ENCODE measurements at regions of chr13 and their contacts with region 1.

Region 1: GRCh38 chr13:51797664-51798488 is 6.1 kb downstream of the DHRS12 start:
- DNase-seq: peak; percentile 66
- ATAC-seq: peak; percentile 84
- H3K4me3 Mint-ChIP-seq: no peak overlapping the region
- H3K27ac Mint-ChIP-seq: no peak overlapping the region
- H3K4me1 Mint-ChIP-seq: peaks cover 45% of the 10 kb centered on the region
- H3K27me3 Mint-ChIP-seq: no peaks in the 10 kb centered on the region
- CTCF ChIP-seq: 0 out of 2 replicates have a peak, but pooled peaks have one; percentile 33

Region 2: GRCh38 chr13:51435002-51435578 is 362.8 kb before region 1 on chr13:
- CTCF ChIA-PET with region 1: interaction called, 33 read pairs
- POLR2A ChIA-PET with region 1: no interaction called
- DNase-seq: no peak
- ATAC-seq: no peak
- H3K4me3 Mint-ChIP-seq: no peak overlapping the region
- H3K27ac Mint-ChIP-seq: no peak overlapping the region
- H3K4me1 Mint-ChIP-seq: peaks cover 37% of the 10 kb centered on the region
- H3K27me3 Mint-ChIP-seq: no peaks in the 10 kb centered on the region
- CTCF ChIP-seq: no peak; the same call in 1 of the 2 replicates

Region 3: GRCh38 chr13:51452361-51453206 is 345.3 kb before region 1 on chr13 and contains the start of gene INTS6:
- CTCF ChIA-PET with region 1: interaction called, 18 read pairs
- POLR2A ChIA-PET with region 1: interaction called, 3 read pairs
- DNase-seq: peak; percentile 99
- ATAC-seq: peak; percentile 92
- H3K4me3 Mint-ChIP-seq: peak within 1 kb of the TSS; percentile 83
- H3K27ac Mint-ChIP-seq: peak within 1 kb of the TSS; percentile 96
- H3K4me1 Mint-ChIP-seq: peaks cover 27% of the 10 kb centered on the region
- H3K27me3 Mint-ChIP-seq: no peaks in the 10 kb centered on the region; the same call in 1 of the 2 replicates
- CTCF ChIP-seq: no peak
- total RNA-seq, gene INTS6: 27.2 to 40.4 TPM (median 35.7 TPM) in 3 replicates

Region 4: DNA sequence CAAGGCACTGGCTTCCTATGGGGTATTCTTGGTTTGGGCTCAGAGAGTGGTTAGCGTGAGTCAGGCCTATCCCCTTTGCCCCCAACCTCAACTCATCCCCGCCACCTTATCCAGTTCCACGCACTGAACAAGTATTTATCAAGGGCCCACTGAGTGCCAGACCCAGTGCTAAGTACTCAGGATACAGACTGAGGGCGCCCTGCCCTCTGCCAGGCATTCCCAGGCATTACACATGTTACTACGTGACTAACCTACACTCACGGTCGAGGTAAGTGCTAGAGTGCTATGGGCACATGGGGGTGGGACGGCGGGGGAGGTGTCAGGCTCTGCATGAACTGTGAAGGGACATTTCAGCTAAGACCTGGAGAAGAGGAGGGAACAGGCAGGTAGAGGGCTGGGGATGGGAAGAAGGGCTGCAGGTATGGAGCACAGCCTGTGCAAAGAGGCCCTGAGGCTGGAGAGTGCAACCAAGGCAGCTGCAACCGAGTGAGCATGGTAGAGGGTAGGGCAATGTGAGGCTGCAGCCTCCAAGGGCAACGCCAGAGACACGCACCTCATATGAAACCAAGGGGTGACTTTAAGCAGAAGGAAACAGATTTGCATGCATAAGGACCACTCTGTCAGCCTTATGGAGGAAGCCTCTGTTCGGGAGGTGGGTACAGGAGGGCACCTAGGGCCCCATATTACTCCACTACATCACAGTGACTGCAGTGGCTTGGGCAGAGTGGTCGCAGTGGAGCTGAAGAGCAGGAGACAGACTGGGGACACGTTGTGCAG is 16.4 kb before region 1 on chr13:
- CTCF ChIA-PET with region 1: interaction called, 26 read pairs
- POLR2A ChIA-PET with region 1: interaction called, 6 read pairs
- DNase-seq: peak; percentile 56
- ATAC-seq: peak; percentile 88
- H3K4me3 Mint-ChIP-seq: no peak overlapping the region
- H3K27ac Mint-ChIP-seq: no peak overlapping the region
- H3K4me1 Mint-ChIP-seq: peaks cover 10% of the 10 kb centered on the region
- H3K27me3 Mint-ChIP-seq: no peaks in the 10 kb centered on the region
- CTCF ChIP-seq: no peak

Region 5: GRCh38 chr13:51844862-51845573 is 47.1 kb after region 1 on chr13 and contains the start of gene TMEM272:
- CTCF ChIA-PET with region 1: interaction called, 10 read pairs
- POLR2A ChIA-PET with region 1: no interaction called
- DNase-seq: peak; percentile 81
- ATAC-seq: peak; percentile 73
- H3K4me3 Mint-ChIP-seq: no peak within 1 kb of the TSS
- H3K27ac Mint-ChIP-seq: no peak within 1 kb of the TSS
- H3K4me1 Mint-ChIP-seq: peaks cover 4% of the 10 kb centered on the region; the same call in 1 of the 2 replicates
- H3K27me3 Mint-ChIP-seq: no peaks in the 10 kb centered on the region; the same call in 1 of the 2 replicates
- CTCF ChIP-seq: peak; percentile 89
- total RNA-seq, gene TMEM272: 0.09 to 0.21 TPM in 2 of 3 replicates, not detected in the other

Measured in WTC11 (cell line).